ENCODE measurements at regions of chr1 and their contacts with region 1.

Region 1: DNA sequence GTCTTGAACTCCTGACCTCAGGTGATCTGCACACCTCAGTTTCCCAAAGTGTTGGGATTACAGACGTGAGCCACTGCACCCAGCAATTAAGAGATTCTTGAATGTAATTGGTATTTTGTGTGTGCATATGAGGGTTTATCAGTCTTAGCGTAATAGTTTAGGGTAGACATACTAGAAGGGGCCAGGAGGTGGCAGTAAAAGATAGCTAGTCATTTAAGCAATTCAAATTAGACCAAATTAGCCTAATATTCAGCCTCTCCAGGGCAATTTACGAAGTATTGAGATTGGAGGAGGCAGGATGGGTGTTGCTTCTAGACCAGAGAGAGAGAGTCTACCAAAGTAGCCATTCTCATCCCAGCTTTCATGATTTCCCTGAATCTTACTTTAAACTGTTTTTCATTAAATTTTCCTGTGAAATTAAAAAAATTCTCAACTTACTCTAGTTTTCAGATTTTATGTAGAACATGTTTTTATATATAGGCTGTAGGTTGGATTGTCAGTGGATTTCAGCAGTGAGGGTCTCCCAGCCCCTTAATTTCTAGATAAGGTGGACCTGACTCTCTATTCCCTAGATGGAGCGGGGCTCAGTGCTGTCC is 119.7 kb downstream of the HHAT start:
- DNase-seq: peak; percentile 49
- ATAC-seq: no peak
- H3K4me3 Mint-ChIP-seq: no peak overlapping the region
- H3K27ac Mint-ChIP-seq: no peak overlapping the region
- H3K4me1 Mint-ChIP-seq: peaks cover 28% of the 10 kb centered on the region
- H3K27me3 Mint-ChIP-seq: peaks cover 2% of the 10 kb centered on the region

Region 2: GRCh38 chr1:210264981-210265380 is 183.4 kb before region 1 on chr1:
- CTCF ChIA-PET with region 1: no interaction called
- POLR2A ChIA-PET with region 1: no interaction called
- intact Hi-C with region 1: no loop called
- DNase-seq: no peak
- ATAC-seq: no peak
- H3K4me3 Mint-ChIP-seq: no peak overlapping the region
- H3K27ac Mint-ChIP-seq: no peak overlapping the region
- H3K4me1 Mint-ChIP-seq: no peaks in the 10 kb centered on the region
- H3K27me3 Mint-ChIP-seq: peaks cover 14% of the 10 kb centered on the region

Region 3: GRCh38 chr1:210373885-210374599 is 74.4 kb before region 1 on chr1:
- CTCF ChIA-PET with region 1: interaction called, 7 read pairs
- POLR2A ChIA-PET with region 1: interaction called, 58 read pairs
- intact Hi-C with region 1: loop called (anchors 1 to 2 kb)
- DNase-seq: peak; percentile 90
- ATAC-seq: peak; percentile 82
- H3K4me3 Mint-ChIP-seq: no peak overlapping the region
- H3K27ac Mint-ChIP-seq: peak overlapping the region; percentile 82
- H3K4me1 Mint-ChIP-seq: peaks cover 27% of the 10 kb centered on the region
- H3K27me3 Mint-ChIP-seq: no peaks in the 10 kb centered on the region

Region 4: DNA sequence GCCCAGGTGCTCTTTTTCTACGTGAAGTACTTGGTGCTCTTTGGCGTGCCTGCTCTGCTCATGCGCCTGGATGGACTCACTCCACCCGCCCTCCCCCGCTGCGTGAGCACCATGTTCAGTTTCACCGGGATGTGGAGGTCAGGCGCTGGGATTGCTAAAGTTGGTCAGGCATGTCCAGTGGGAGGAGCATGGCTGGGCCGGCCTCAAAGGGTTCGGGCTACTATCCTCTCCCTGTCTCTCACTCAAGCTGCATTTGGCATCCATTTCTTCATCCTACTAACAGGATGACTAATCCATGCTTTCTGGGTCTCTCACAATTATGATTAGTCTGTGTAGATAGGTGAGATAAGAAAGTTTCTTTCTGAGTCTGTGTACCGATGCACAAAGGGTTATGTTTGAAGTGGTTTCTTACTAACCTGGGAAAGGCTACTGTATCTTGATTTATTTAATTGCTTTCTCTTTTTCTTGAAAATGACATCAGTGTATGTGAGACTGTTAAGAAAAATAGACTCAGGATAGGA is 16.2 kb after region 1 on chr1:
- CTCF ChIA-PET with region 1: interaction called, 17 read pairs
- POLR2A ChIA-PET with region 1: no interaction called
- intact Hi-C with region 1: loop called (anchors 1 kb)
- DNase-seq: peak; percentile 45
- ATAC-seq: peak; percentile 92
- H3K4me3 Mint-ChIP-seq: no peak overlapping the region
- H3K27ac Mint-ChIP-seq: peak overlapping the region; percentile 37
- H3K4me1 Mint-ChIP-seq: peaks cover 24% of the 10 kb centered on the region
- H3K27me3 Mint-ChIP-seq: no peaks in the 10 kb centered on the region

Region 5: GRCh38 chr1:210882414-210883221 is 434.2 kb after region 1 on chr1:
- CTCF ChIA-PET with region 1: no interaction called
- POLR2A ChIA-PET with region 1: no interaction called
- intact Hi-C with region 1: loop called (anchors 1 to 2 kb)
- DNase-seq: peak; percentile 12
- ATAC-seq: peak; percentile 84
- H3K4me3 Mint-ChIP-seq: no peak overlapping the region
- H3K27ac Mint-ChIP-seq: peak overlapping the region; percentile 77
- H3K4me1 Mint-ChIP-seq: peaks cover 15% of the 10 kb centered on the region
- H3K27me3 Mint-ChIP-seq: peaks cover 18% of the 10 kb centered on the region

Region 6: DNA sequence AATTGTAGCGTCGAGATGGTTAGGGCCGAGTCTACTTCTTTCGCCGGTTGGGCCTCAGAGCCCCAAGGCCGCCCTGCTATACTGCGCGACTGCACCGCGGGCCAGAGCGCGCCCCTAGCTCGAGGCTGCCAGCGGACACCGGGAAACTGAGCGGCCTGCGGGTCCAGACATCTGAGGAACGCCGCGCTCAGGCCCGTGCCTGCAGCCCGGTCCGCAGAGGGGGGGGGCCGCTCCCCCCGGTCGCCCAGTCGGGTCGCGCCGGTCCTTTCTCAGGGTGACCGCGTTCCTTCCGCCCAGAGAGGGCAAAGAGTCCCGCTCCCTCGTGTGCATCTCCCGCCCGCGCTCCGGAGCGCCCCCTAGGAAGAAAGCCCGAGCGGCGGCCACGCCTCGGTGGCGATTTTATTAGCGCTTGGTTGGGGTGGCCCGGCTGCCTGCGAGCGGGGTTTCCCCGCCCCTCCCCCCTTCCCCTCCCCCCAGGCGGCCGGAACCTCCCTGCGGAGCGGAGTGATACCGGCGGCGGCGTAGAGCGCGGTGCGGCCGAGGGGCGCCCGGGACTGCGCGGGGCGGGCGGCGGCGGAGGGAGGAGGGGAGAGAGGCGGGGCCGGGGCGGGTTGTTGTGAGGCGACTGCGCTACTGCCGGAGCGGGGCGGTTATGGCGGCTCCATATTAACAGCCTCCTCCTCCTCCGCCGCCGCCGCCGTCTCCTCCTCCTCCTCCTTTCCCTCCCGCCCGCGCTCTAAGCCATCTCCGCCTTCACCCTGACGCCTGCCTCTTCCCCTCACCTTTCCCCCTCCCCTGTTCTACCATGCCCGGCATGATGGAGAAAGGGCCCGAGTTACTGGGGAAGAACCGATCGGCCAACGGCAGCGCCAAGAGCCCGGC is 810.6 kb after region 1 on chr1 and contains the start of gene RCOR3:
- CTCF ChIA-PET with region 1: no interaction called
- POLR2A ChIA-PET with region 1: no interaction called
- intact Hi-C with region 1: loop called (anchors 1 to 2 kb)
- DNase-seq: peak; percentile 97
- ATAC-seq: peak; percentile 83
- H3K4me3 Mint-ChIP-seq: peak within 1 kb of the TSS; percentile 90
- H3K27ac Mint-ChIP-seq: peak within 1 kb of the TSS; percentile 96
- H3K4me1 Mint-ChIP-seq: peaks cover 13% of the 10 kb centered on the region
- H3K27me3 Mint-ChIP-seq: no peaks in the 10 kb centered on the region
- total RNA-seq, gene RCOR3: 31.0 to 33.4 TPM

Region 7: GRCh38 chr1:211514030-211514754 is 1065.8 kb after region 1 on chr1:
- CTCF ChIA-PET with region 1: no interaction called
- POLR2A ChIA-PET with region 1: no interaction called
- intact Hi-C with region 1: loop called in 1 of 2 experiments (anchors 1 kb)
- DNase-seq: peak; percentile 91
- ATAC-seq: peak; percentile 85
- H3K4me3 Mint-ChIP-seq: peak overlapping the region; percentile 28
- H3K27ac Mint-ChIP-seq: no peak overlapping the region
- H3K4me1 Mint-ChIP-seq: peaks cover 22% of the 10 kb centered on the region
- H3K27me3 Mint-ChIP-seq: peaks cover 2% of the 10 kb centered on the region